ENCODE measurements at regions of chr18 and their contacts with region 1.

Region 1: GRCh38 chr18:13235981-13236380 is 17.4 kb downstream of the LDLRAD4 start:
- DNase-seq: peak; percentile 65 to 80
- H3K4me3 ChIP-seq: no peak overlapping the region
- H3K27ac ChIP-seq: peak overlapping the region in 1 of 2 donors; percentile 20
- H3K4me1 ChIP-seq: no peaks in the 10 kb centered on the region
- H3K27me3 ChIP-seq: no peaks in the 10 kb centered on the region
- CTCF ChIP-seq: no peak
- POLR2A ChIP-seq: no peak

Region 2: DNA sequence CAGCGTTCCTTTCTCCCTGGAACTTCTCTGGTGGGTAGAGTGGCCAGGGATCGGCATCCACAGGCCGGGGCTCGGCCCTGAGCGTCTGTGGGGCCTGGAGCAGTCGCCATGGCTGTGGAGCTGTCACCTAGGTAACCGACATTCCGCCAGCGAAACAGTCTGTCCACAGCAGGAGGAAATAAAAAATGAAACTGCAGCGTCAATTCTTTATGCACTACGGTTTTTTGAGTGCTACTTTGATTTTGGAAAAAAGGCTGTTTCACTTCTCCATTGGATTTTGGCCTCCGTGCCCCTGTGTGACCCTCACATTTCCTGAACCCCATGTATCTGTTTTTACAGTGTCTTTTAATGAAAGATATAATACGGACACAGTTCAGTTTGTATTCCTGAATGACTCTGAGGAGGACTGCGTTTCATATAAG is 146.0 kb after region 1 on chr18:
- intact Hi-C with region 1: loop called (anchors 10 kb)
- DNase-seq: peak; percentile 69 to 73
- H3K4me3 ChIP-seq: peak overlapping the region; percentile 15 to 29
- H3K27ac ChIP-seq: peak overlapping the region; percentile 73 to 88
- H3K4me1 ChIP-seq: no peaks in the 10 kb centered on the region
- H3K27me3 ChIP-seq: no peaks in the 10 kb centered on the region
- CTCF ChIP-seq: no peak
- POLR2A ChIP-seq: no peak

Measured in uterus (tissue), 4 donors.